ENCODE measurements at regions of chr9 and their contacts with region 1.

Region 1: GRCh38 chr9:81237565-81238231 is 451.6 kb downstream of the TLE1 start:
- DNase-seq: peak; percentile 77
- ATAC-seq: peak; percentile 98
- H3K4me3 ChIP-seq: no peak overlapping the region
- H3K27ac ChIP-seq: peak overlapping the region; percentile 31; the same call in 1 of the 2 replicates
- H3K4me1 ChIP-seq: no peaks in the 10 kb centered on the region
- H3K27me3 ChIP-seq: no peaks in the 10 kb centered on the region
- CTCF ChIP-seq: no peak
- POLR2A ChIP-seq: no peak
- RAD21 ChIP-seq: peak; percentile 1; the same call in 1 of the 2 replicates

Region 2: GRCh38 chr9:81305561-81306182 is 68.0 kb after region 1 on chr9:
- CTCF ChIA-PET with region 1: no interaction called
- POLR2A ChIA-PET with region 1: no interaction called
- dilution Hi-C with region 1: no loop called
- in situ Hi-C with region 1: no loop called
- intact Hi-C with region 1: loop called (anchors 10 kb)
- DNase-seq: no peak
- ATAC-seq: no peak
- H3K4me3 ChIP-seq: no peak overlapping the region
- H3K27ac ChIP-seq: no peak overlapping the region
- H3K4me1 ChIP-seq: no peaks in the 10 kb centered on the region
- H3K27me3 ChIP-seq: no peaks in the 10 kb centered on the region
- CTCF ChIP-seq: no peak
- POLR2A ChIP-seq: no peak
- RAD21 ChIP-seq: no peak

Measured in IMR-90 (cell line).